HEK293 (cell line): ENCODE measurements at regions of chr6 and their contacts with region 1.

Region 1: GRCh38 chr6:12605888-12606345 is 110.7 kb upstream of the PHACTR1 start:
- H3K4me3 ChIP-seq: no peak overlapping the region
- H3K27ac ChIP-seq: no peak overlapping the region
- H3K4me1 ChIP-seq: peaks cover 14% of the 10 kb centered on the region
- CTCF ChIP-seq: peak; percentile 55; the same call in 1 of the 2 replicates

Region 2: DNA sequence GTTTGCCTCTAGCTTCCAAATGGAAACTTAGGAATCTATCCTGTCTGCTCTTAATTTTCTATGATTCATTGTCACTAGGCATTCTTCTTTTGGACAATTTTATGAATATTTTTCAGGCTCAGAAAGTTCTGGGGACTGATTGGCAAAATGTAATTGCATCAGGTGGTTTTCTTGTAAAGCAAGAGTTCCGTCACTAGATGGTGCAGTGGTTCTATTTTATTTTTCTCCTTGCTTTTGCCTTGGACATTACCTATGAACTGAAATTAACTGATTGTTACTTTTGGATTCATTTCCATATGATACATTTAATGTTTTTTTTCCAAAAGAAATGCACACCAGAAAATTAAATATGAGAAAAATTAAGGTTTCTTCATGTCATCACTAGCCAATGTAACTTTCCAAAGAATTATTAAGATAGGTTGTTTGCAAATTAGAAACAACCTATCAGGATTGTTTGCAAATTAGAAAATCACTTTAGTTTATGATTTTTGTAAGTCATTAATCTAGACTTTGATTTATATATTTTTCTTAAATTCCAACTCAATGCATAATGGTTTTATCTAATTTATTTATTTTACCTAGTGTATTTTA is 1020.4 kb before region 1 on chr6:
- CTCF ChIA-PET with region 1: interaction called, 10 read pairs
- POLR2A ChIA-PET with region 1: no interaction called
- H3K4me3 ChIP-seq: no peak overlapping the region
- H3K27ac ChIP-seq: no peak overlapping the region
- H3K4me1 ChIP-seq: no peaks in the 10 kb centered on the region
- CTCF ChIP-seq: peak; percentile 53; the same call in 1 of the 2 replicates

Region 3: GRCh38 chr6:12275087-12275486 is 330.8 kb before region 1 on chr6:
- CTCF ChIA-PET with region 1: interaction called, 10 read pairs
- POLR2A ChIA-PET with region 1: no interaction called
- H3K4me3 ChIP-seq: no peak overlapping the region
- H3K27ac ChIP-seq: no peak overlapping the region
- H3K4me1 ChIP-seq: no peaks in the 10 kb centered on the region
- CTCF ChIP-seq: no peak

Region 4: DNA sequence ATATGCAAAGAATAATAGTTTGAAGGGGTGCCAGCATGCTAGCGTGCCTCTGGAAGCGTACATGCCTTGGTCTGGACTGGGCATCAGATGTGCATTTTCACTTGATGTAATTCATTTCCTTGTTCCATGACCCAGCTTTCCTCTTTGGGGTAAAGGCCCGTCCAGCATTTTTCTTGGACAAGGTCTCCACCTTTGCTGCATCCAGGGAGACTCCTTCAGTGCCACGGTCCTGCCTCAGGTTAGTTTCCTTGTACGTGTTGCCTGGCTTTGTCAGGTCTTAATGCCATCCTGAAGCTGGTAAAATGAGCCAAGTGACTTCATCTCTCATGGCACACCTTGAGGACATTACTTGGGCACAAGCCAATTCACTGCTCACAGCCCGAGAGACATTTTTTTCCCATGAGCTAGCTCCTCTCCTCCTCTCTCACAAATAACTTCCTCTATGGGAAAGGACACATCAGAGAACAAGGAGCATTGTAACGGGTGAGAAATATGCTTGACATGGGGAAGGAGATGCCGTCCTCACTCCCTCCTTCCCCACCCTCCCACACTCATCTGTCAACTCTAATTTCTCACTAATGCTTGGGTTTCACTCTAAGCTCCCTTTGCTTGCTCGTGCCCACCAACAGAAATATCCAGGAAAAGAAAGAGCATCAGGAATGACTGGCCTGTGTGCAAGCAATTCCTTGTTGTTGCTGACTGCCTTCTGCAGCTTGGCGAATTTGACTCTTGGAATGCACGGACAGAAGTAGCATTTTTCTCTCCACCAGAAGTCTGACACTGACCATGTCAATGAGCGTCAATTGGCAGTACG is 291.7 kb before region 1 on chr6:
- CTCF ChIA-PET with region 1: interaction called, 10 read pairs
- POLR2A ChIA-PET with region 1: no interaction called
- H3K4me3 ChIP-seq: no peak overlapping the region
- H3K27ac ChIP-seq: no peak overlapping the region
- H3K4me1 ChIP-seq: no peaks in the 10 kb centered on the region
- CTCF ChIP-seq: no peak

Region 5: GRCh38 chr6:12504319-12504966 is 101.5 kb before region 1 on chr6:
- CTCF ChIA-PET with region 1: interaction called, 19 read pairs
- POLR2A ChIA-PET with region 1: no interaction called
- H3K4me3 ChIP-seq: no peak overlapping the region
- H3K27ac ChIP-seq: no peak overlapping the region
- H3K4me1 ChIP-seq: no peaks in the 10 kb centered on the region
- CTCF ChIP-seq: no peak

Region 6: GRCh38 chr6:12528581-12529363 is 77.1 kb before region 1 on chr6:
- CTCF ChIA-PET with region 1: no interaction called
- POLR2A ChIA-PET with region 1: no interaction called
- H3K4me3 ChIP-seq: no peak overlapping the region
- H3K27ac ChIP-seq: peak overlapping the region; percentile 47
- H3K4me1 ChIP-seq: peaks cover 14% of the 10 kb centered on the region
- CTCF ChIP-seq: no peak

Region 7: GRCh38 chr6:12656906-12657305 is 51.0 kb after region 1 on chr6:
- CTCF ChIA-PET with region 1: no interaction called
- POLR2A ChIA-PET with region 1: no interaction called
- H3K4me3 ChIP-seq: no peak overlapping the region
- H3K27ac ChIP-seq: no peak overlapping the region
- H3K4me1 ChIP-seq: no peaks in the 10 kb centered on the region
- CTCF ChIP-seq: no peak

Region 8: GRCh38 chr6:12735786-12736185 is 129.9 kb after region 1 on chr6:
- CTCF ChIA-PET with region 1: no interaction called
- POLR2A ChIA-PET with region 1: no interaction called
- H3K4me3 ChIP-seq: no peak overlapping the region
- H3K27ac ChIP-seq: no peak overlapping the region
- H3K4me1 ChIP-seq: peaks cover 2% of the 10 kb centered on the region
- CTCF ChIP-seq: no peak